Tibial artery (tissue), 4 donors: ENCODE measurements at regions of chr12 and their contacts with region 1.

Region 1: DNA sequence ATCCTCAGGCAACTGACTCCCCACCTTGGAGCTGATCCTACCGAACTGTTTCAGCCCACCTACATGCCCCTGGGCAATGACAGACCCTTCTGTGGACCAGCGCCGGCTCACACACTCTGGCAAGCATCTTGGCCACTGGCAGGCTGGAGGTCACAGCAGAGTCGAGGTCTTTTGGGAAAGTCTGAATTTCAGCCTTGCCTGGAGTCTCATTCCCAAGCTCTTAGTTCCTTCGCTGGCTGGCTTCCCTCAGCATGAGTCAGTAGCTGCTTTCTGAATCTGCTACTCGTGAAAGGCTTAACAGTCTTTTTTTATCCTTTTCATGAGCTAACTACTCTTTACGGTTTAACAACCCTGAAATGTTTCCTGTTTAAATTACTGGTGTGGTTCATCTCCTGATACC is 44.5 kb downstream of the ASCL4 start:
- DNase-seq: peak in 1 of 2 donors; percentile 24
- H3K4me3 ChIP-seq: no peak overlapping the region
- H3K27ac ChIP-seq: no peak overlapping the region
- H3K4me1 ChIP-seq: peaks cover 0 to 4% (median 0%) of the 10 kb centered on the region in 4 donors
- H3K27me3 ChIP-seq: no peaks in the 10 kb centered on the region
- CTCF ChIP-seq: no peak

Region 2: DNA sequence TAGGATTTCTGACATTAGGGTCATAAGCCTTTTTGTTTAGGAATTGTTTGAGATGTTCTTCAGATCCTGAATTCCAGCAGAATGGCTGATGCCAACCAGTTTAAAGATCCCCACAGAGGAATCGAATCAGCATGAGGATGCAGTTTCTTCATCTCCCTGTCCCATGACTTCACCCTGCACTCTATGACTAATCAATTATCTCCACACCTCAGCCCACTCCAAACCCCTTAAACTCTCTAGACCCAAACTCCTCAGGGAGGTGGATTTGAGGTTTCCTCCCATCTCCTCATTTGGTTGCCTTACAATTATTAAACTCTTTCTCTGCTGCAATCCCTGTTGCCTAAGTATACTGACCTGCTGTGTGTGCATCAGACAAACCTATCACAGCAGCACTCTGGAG is 639.1 kb before region 1 on chr12:
- intact Hi-C with region 1: loop called (anchors 10 kb)
- DNase-seq: no peak
- H3K4me3 ChIP-seq: no peak overlapping the region
- H3K27ac ChIP-seq: no peak overlapping the region
- H3K4me1 ChIP-seq: no peaks in the 10 kb centered on the region
- H3K27me3 ChIP-seq: peaks cover 0 to 7% of the 10 kb centered on the region in 2 donors
- CTCF ChIP-seq: no peak